ENCODE measurements at regions of chr21 and their contacts with region 1.

Region 1: DNA sequence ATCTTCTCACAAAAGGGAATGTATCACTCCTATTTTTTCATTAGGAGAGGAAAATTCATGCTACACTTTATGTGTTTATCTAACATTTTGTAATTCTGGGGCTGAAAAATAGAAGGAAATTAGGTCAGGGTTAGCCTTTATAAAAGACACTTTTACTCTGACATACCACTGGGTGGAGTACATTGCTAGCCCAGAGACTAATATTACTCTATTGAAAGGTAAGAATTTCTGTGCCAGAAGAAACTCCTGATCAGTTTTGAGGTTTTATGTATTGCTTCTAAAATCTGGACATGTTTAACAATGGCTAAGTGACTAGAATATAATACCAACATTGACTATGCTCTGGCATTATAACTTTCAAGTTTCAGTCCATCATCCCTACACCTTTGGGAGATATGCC is 724.6 kb downstream of the USP25 start:
- DNase-seq: no peak
- H3K4me3 ChIP-seq: no peak overlapping the region
- H3K27ac ChIP-seq: no peak overlapping the region
- H3K4me1 ChIP-seq: no peaks in the 10 kb centered on the region
- H3K27me3 ChIP-seq: no peaks in the 10 kb centered on the region
- CTCF ChIP-seq: peak; percentile 52

Region 2: DNA sequence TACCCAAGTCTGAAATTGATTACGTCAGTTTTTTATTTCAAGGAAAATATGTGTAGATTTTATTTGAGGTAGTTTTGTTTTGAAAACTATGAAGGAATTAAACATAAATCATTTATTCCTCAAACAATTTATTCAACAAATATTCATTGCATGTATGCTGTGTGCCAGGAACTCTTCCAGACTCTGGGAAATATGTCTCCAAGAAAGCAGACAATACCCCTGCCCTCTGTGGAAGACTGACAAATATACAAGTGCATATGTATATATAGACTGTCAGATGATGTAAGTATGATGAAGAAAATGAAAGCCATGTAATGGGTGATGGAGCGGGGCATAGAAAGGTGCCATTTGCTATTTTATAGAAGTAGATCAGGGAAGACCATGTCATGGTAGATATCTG is 164.9 kb after region 1 on chr21:
- CTCF ChIA-PET with region 1: no interaction called
- POLR2A ChIA-PET with region 1: no interaction called
- intact Hi-C with region 1: loop called (anchors 10 kb)
- DNase-seq: no peak
- H3K4me3 ChIP-seq: no peak overlapping the region
- H3K27ac ChIP-seq: no peak overlapping the region
- H3K4me1 ChIP-seq: no peaks in the 10 kb centered on the region
- H3K27me3 ChIP-seq: no peaks in the 10 kb centered on the region
- CTCF ChIP-seq: no peak

Region 3: GRCh38 chr21:17045214-17045853 is 590.9 kb after region 1 on chr21:
- CTCF ChIA-PET with region 1: no interaction called
- POLR2A ChIA-PET with region 1: no interaction called
- intact Hi-C with region 1: loop called (anchors 10 kb)
- DNase-seq: no peak
- H3K4me3 ChIP-seq: no peak overlapping the region
- H3K27ac ChIP-seq: no peak overlapping the region
- H3K4me1 ChIP-seq: no peaks in the 10 kb centered on the region
- H3K27me3 ChIP-seq: no peaks in the 10 kb centered on the region
- CTCF ChIP-seq: peak; percentile 65; the same call in 1 of the 2 replicates

Measured in PC-9 (cell line).